Activated CD4-positive, alpha-beta T cell treated with anti-CD3 and anti-CD28 coated beads for 36 hours (primary cell): ENCODE measurements at regions of chr21 and their contacts with region 1.

Region 1: GRCh38 chr21:39288987-39289386 is 24.4 kb downstream of the BRWD1 start:
- DNase-seq: no peak
- ATAC-seq: no peak
- H3K4me3 Mint-ChIP-seq: no peak overlapping the region
- H3K27ac Mint-ChIP-seq: no peak overlapping the region
- H3K4me1 Mint-ChIP-seq: no peaks in the 10 kb centered on the region
- H3K27me3 Mint-ChIP-seq: no peaks in the 10 kb centered on the region

Region 2: DNA sequence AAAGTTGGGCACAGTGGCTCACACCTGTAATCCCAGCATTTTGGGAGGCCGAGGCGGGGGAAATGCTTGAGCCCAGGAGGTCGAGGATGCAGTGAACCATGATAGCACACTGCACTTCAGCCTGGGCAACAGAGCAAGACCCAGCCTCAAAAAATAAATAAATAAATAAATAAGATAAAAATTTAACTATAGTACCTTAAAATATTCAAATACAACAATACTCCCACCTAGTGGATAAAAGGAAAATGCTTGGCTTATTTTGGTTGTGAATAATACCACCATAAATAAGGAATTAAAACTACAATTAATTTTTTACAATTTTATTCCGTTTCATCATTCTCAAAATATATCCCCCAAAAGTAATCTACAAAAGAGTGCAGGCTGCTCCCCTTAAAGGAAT is 113.8 kb before region 1 on chr21:
- CTCF ChIA-PET with region 1: no interaction called
- POLR2A ChIA-PET with region 1: no interaction called
- intact Hi-C with region 1: no loop called
- DNase-seq: no peak
- ATAC-seq: no peak
- H3K4me3 Mint-ChIP-seq: no peak overlapping the region
- H3K27ac Mint-ChIP-seq: no peak overlapping the region
- H3K4me1 Mint-ChIP-seq: peaks cover 12% of the 10 kb centered on the region
- H3K27me3 Mint-ChIP-seq: no peaks in the 10 kb centered on the region

Region 3: GRCh38 chr21:39269620-39270019 is 19.4 kb before region 1 on chr21:
- CTCF ChIA-PET with region 1: interaction called, 3 read pairs
- POLR2A ChIA-PET with region 1: no interaction called
- intact Hi-C with region 1: loop called in 1 of 2 experiments (anchors 2 kb)
- DNase-seq: no peak
- ATAC-seq: no peak
- H3K4me3 Mint-ChIP-seq: no peak overlapping the region
- H3K27ac Mint-ChIP-seq: no peak overlapping the region
- H3K4me1 Mint-ChIP-seq: no peaks in the 10 kb centered on the region
- H3K27me3 Mint-ChIP-seq: no peaks in the 10 kb centered on the region

Region 4: GRCh38 chr21:39479142-39479813 is 190.3 kb after region 1 on chr21:
- CTCF ChIA-PET with region 1: no interaction called
- POLR2A ChIA-PET with region 1: no interaction called
- intact Hi-C with region 1: no loop called
- DNase-seq: no peak
- ATAC-seq: no peak
- H3K4me3 Mint-ChIP-seq: no peak overlapping the region
- H3K27ac Mint-ChIP-seq: no peak overlapping the region
- H3K4me1 Mint-ChIP-seq: no peaks in the 10 kb centered on the region
- H3K27me3 Mint-ChIP-seq: no peaks in the 10 kb centered on the region